Activated CD4-positive, alpha-beta T cell treated with anti-CD3 and anti-CD28 coated beads, Interleukin-2, amount 10 ng/mL, durations not matched to agents 24 days and 14 days (primary cell): ENCODE measurements at regions of chr9 and their contacts with region 1.

Region 1: DNA sequence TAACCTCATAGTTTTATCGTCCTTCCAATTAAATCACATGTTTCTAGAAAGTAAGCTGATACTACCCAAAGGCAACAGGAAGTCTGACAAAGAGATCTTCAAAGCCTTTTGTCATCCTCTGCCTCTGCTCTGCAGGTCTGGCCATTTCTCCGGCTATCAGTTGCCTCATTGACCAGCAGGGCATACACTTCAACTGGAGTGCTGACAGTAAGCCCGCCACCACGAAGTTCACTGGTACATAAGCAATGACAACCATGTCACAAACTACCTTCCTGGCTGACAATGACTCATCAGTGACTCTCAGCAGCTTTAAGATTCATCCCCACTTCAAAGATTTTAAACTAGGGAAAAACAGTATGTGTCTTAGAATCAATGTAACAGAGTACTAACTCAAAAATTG is 20.6 kb downstream of the SPTLC1 start:
- DNase-seq: peak; percentile 79
- H3K4me3 Mint-ChIP-seq: peak overlapping the region; percentile 63
- H3K27ac Mint-ChIP-seq: peak overlapping the region; percentile 85
- H3K4me1 Mint-ChIP-seq: peaks cover 48% of the 10 kb centered on the region
- H3K27me3 Mint-ChIP-seq: no peaks in the 10 kb centered on the region

Region 2: GRCh38 chr9:92010705-92011536 is 83.7 kb before region 1 on chr9:
- intact Hi-C with region 1: no loop called
- DNase-seq: no peak
- H3K4me3 Mint-ChIP-seq: no peak overlapping the region
- H3K27ac Mint-ChIP-seq: no peak overlapping the region
- H3K4me1 Mint-ChIP-seq: no peaks in the 10 kb centered on the region
- H3K27me3 Mint-ChIP-seq: peaks cover 18% of the 10 kb centered on the region

Region 3: DNA sequence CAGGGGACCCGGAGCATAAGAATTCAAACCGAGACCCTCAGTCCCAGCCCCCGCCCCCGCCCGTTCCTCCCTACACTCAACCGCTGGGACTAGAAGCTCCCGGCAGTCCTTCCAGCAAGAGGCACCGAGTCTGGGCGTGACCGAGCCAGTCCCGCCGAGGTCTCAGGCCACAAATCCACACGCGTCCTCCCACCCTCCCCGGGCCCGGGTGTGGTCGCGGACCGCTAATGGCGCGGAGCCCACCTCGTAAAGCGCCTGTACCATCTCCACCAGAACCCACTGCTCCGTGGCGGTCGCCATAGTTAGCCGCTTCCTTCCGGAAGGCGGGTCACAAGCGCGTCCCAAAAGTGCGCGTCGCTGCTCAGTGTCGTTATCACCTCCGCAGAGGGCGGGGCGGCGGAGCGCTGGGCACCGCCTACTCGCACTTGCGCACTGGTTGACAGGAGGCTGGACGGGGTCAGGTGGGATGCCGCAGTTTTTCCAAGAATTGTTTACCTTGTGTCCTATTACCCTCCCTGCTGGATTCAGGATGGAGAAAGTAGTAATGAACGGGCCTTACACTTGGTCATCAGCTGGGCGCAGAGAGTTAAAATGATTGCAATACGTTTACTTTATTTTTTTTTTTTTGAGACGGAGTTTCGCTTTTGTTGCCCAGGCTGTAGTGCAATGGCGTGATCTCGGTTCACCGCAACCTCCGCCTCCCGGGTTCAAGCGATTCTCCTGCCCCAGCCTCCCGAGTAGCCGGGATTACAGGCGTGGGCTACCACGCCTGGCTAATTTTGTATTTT is 20.6 kb after region 1 on chr9 and contains the start of gene SPTLC1:
- intact Hi-C with region 1: loop called (anchors 2 kb)
- DNase-seq: peak; percentile 99
- H3K4me3 Mint-ChIP-seq: peak within 1 kb of the TSS; percentile 97
- H3K27ac Mint-ChIP-seq: peak within 1 kb of the TSS; percentile 98
- H3K4me1 Mint-ChIP-seq: peaks cover 21% of the 10 kb centered on the region
- H3K27me3 Mint-ChIP-seq: peaks cover 2% of the 10 kb centered on the region
- total RNA-seq, gene SPTLC1: 62.5 and 64.9 TPM in 2 replicates

Region 4: GRCh38 chr9:92151691-92152393 is 57.2 kb after region 1 on chr9:
- intact Hi-C with region 1: no loop called
- DNase-seq: no peak
- H3K4me3 Mint-ChIP-seq: no peak overlapping the region
- H3K27ac Mint-ChIP-seq: no peak overlapping the region
- H3K4me1 Mint-ChIP-seq: peaks cover 7% of the 10 kb centered on the region
- H3K27me3 Mint-ChIP-seq: peaks cover 9% of the 10 kb centered on the region